ENCODE measurements at regions of chr22 and their contacts with region 1.

Region 1: DNA sequence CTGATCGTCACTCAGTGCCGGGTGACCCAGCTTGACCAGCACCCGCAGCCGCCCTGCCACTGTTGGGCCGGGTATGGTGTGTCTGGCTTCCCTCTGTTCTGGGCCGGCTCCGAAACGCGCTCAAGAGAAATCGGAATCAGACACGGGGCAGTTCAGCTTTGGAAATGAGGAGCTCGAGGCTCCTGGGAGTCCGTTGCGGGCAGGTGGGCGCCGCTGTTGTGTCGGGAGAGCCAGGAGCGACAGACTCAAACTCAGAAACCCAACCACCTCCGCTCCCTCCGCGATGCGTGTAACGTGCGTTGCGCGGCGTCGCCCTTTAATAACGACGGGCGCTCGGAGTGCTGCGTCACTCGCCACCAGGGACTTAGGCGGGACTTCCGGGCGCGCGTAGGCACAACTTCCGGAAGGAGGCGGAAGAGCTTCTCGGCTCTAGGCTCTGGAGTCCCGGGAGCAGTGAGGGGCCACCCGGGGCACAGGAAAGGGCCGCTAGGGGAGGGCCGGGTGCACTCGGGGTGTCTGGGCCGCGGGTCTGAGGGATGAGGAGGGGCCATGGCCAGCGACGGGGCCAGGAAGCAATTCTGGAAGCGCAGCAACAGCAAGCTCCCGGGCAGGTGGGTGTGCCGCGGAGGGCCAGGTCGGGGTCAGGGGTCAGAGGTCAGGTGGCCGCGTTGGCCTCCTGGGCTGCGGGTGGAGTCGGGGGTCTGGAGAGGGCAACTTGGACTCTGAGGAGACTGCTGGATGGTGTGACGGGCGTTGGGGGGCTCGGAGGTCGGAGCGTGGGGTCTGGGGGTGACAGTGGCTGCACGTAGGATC is at the start of gene TBC1D22A:
- DNase-seq: peak; percentile 89
- ATAC-seq: peak; percentile 89
- H3K4me3 ChIP-seq: peak within 1 kb of the TSS; percentile 74 to 96 (median 80)
- H3K27ac ChIP-seq: peak within 1 kb of the TSS; percentile 91
- H3K4me1 ChIP-seq: peaks cover 56% of the 10 kb centered on the region
- H3K27me3 ChIP-seq: no peaks in the 10 kb centered on the region; a peak in 1 of 5 replicates
- CTCF ChIP-seq: 0 out of 2 replicates have a peak, but pooled peaks have one; percentile 23
- EP300 ChIP-seq: peak; percentile 37 to 45; a peak in 2 of 4 replicates
- POLR2A ChIP-seq: peak; percentile 99 to 100
- RAD21 ChIP-seq: no peak
- total RNA-seq, gene TBC1D22A: 17.3 and 17.6 TPM in 2 replicates

Region 2: GRCh38 chr22:46717020-46717419 is 45.4 kb before region 1 on chr22:
- CTCF ChIA-PET with region 1: no interaction called
- POLR2A ChIA-PET with region 1: no interaction called
- in situ Hi-C with region 1: no loop called
- intact Hi-C with region 1: no loop called
- DNase-seq: no peak
- ATAC-seq: no peak
- H3K4me3 ChIP-seq: no peak overlapping the region
- H3K27ac ChIP-seq: no peak overlapping the region
- H3K4me1 ChIP-seq: peaks cover 6% of the 10 kb centered on the region; the same call in 1 of the 2 replicates
- H3K27me3 ChIP-seq: no peaks in the 10 kb centered on the region
- CTCF ChIP-seq: no peak
- EP300 ChIP-seq: no peak
- POLR2A ChIP-seq: no peak
- RAD21 ChIP-seq: no peak

Region 3: DNA sequence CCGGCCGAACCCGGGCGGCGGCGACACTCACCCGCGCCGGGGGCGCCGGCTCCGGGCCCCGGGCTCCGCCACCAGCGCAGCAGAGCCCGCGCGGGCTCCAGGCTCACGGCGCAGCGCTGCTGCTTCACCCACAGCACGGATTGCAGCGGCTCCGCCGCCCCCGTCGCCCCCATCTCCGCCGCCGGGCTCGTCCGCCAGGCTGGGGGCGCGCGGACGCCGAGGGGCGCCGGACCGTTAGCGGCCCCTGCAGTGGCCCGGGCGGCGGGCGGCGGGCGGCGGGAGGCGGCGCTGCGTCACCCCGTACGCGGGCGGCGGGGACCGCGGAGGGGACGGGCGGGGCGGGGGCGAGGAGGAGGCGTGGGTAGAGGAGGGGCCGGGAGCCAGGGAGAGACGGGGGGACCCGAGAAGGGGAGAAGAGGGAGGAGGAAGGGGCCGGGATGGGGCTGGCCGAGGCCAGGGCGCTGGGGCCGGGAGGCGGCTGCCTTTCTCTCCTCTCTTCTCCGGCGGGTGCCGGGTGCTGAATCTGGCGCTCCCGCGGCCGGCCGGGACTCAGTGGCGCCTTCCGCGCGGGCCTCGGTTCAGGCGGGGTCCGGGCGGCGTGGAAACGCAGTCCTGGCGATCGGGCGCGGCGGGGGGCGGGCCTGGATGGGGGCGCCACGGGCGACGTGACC is 24.3 kb before region 1 on chr22 and contains the start of gene CERK:
- CTCF ChIA-PET with region 1: interaction called, 5 read pairs
- POLR2A ChIA-PET with region 1: interaction called, 42 read pairs
- in situ Hi-C with region 1: no loop called
- intact Hi-C with region 1: no loop called
- DNase-seq: peak; percentile 36
- ATAC-seq: peak; percentile 60
- H3K4me3 ChIP-seq: peak within 1 kb of the TSS; percentile 79 to 92 (median 84)
- H3K27ac ChIP-seq: peak within 1 kb of the TSS; percentile 87
- H3K4me1 ChIP-seq: peaks cover 78% of the 10 kb centered on the region
- H3K27me3 ChIP-seq: no peaks in the 10 kb centered on the region; a peak in 1 of 5 replicates
- CTCF ChIP-seq: no peak
- EP300 ChIP-seq: no peak
- POLR2A ChIP-seq: peak in 1 of 2 experiments; percentile 73; a peak in 2 of 4 replicates
- RAD21 ChIP-seq: no peak
- total RNA-seq, gene CERK: 40.3 and 41.8 TPM in 2 replicates

Region 4: GRCh38 chr22:46748908-46749675 is 13.4 kb before region 1 on chr22:
- CTCF ChIA-PET with region 1: no interaction called
- POLR2A ChIA-PET with region 1: interaction called, 25 read pairs
- in situ Hi-C with region 1: no loop called
- intact Hi-C with region 1: loop called (anchors 1 kb)
- DNase-seq: no peak
- ATAC-seq: no peak
- H3K4me3 ChIP-seq: peak overlapping the region in 1 of 3 experiments; percentile 56; a peak in 2 of 6 replicates
- H3K27ac ChIP-seq: no peak overlapping the region
- H3K4me1 ChIP-seq: peaks cover 73% of the 10 kb centered on the region
- H3K27me3 ChIP-seq: peaks cover 3 to 25% of the 10 kb centered on the region in 2 experiments; a peak in 3 of 5 replicates
- CTCF ChIP-seq: no peak
- EP300 ChIP-seq: no peak
- POLR2A ChIP-seq: no peak
- RAD21 ChIP-seq: no peak

Region 5: DNA sequence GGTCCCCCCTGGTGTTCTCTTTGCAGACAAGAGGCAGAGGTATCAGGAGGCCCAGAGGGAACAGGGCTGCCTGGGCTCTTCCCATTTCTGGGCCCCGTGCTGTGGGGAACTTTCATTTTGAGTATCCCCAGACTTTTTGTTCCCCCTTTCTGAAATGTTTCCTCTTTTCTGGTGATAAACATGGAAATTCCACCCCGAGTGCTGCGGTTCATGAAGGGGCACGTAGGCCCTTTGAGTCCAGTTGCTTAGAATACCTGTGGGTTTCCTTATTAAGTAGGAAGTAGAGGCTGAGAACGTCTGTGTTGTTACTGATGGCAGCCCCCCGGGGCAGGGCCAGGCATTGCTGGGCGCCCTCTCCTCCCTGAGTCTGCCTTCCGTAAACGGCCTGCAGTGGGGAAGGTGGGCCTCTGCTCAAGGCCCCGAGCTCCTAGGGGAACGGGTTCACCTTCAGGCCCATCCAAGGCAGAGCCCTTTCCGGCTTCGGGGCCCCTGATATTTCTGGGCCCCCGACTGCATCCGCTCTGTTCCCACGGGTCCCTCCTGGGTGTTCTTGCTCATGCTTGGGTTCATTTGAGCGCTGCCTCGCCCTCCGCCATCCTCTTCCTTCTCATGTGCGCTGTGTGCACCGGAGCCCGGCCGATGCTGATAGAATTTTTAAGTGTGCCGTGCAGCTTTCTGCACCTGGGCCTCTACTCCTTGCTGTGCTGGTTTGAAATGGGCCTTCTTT is 12.0 kb after region 1 on chr22:
- CTCF ChIA-PET with region 1: no interaction called
- POLR2A ChIA-PET with region 1: interaction called, 144 read pairs
- in situ Hi-C with region 1: no loop called
- intact Hi-C with region 1: loop called (anchors 2 kb)
- DNase-seq: no peak
- ATAC-seq: peak; percentile 48
- H3K4me3 ChIP-seq: peak overlapping the region; percentile 58 to 77 (median 64)
- H3K27ac ChIP-seq: peak overlapping the region; percentile 82
- H3K4me1 ChIP-seq: peaks cover 46% of the 10 kb centered on the region
- H3K27me3 ChIP-seq: no peaks in the 10 kb centered on the region
- CTCF ChIP-seq: no peak
- EP300 ChIP-seq: no peak
- POLR2A ChIP-seq: no peak
- RAD21 ChIP-seq: no peak

Region 6: DNA sequence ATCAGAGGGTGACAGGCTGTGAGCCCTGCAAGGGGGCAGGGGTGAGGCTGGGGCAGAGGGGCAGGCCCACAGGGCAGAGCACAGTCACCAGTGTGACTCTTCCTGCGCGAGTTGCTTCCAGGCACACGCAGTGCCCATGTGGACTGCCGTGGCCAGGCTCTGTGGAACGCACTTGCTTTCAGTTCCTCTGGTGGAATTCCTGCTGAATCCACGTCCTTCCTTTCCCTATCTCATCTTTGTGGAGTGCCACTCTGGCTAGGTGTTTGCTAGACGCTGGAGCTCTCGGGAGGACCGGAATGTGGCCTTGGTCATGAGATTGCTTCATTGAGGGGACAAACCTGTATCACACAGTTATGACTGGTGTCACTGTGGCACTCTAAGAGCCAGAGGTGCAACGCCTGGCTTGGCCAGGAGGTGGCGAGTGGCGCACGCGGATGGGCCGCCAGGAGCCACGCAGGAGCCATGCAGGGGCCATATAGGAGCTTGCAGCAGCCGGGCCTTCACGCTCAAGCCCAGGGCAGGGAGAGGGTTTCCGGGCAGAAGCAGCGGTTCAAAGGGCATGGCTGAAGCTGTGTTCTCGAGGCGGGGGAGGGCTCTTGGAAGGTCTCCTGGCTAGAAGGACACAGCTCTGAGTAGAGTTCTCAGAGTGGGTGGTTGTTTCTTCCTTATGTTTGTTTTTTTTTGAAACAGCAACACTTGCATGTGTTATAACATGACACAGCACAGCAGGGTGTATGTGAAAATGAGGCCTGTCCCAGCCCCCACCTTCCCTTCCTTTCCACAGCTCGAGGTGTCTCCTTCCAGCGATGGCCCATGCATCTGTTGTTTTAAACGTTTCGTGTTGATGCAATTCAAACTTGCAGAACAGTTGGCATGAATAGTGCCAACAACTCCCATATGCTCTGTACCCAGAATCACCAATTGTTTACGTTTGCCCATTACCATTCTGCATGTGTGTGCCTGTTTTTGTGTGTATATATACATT is 36.2 kb after region 1 on chr22:
- CTCF ChIA-PET with region 1: interaction called, 5 read pairs
- POLR2A ChIA-PET with region 1: interaction called, 25 read pairs
- in situ Hi-C with region 1: no loop called
- intact Hi-C with region 1: loop called (anchors 2 kb)
- DNase-seq: peak; percentile 92
- ATAC-seq: peak; percentile 95
- H3K4me3 ChIP-seq: no peak overlapping the region
- H3K27ac ChIP-seq: peak overlapping the region; percentile 56
- H3K4me1 ChIP-seq: peaks cover 57% of the 10 kb centered on the region
- H3K27me3 ChIP-seq: no peaks in the 10 kb centered on the region
- CTCF ChIP-seq: peak; percentile 100
- EP300 ChIP-seq: peak in 1 of 2 experiments; percentile 65; a peak in 2 of 4 replicates
- POLR2A ChIP-seq: no peak
- RAD21 ChIP-seq: peak; percentile 98

Measured in HepG2 (cell line).